Naive thymus-derived CD4-positive, alpha-beta T cell (primary cell): ENCODE measurements at regions of chr6 and their contacts with region 1.

Region 1: GRCh38 chr6:70673601-70674000 is 5.9 kb downstream of the SMAP1 start:
- DNase-seq: no peak
- ATAC-seq: no peak
- H3K4me3 ChIP-seq: no peak overlapping the region
- H3K4me3 Mint-ChIP-seq: peak overlapping the region in 1 of 10 donors; percentile 23
- H3K27ac ChIP-seq: no peak overlapping the region
- H3K27ac Mint-ChIP-seq: peak overlapping the region in 3 of 9 donors; percentile 12 to 63 (median 48)
- H3K4me1 ChIP-seq: peaks cover 21 to 22% of the 10 kb centered on the region in 2 donors
- H3K4me1 Mint-ChIP-seq: peaks cover 33 to 86% (median 72%) of the 10 kb centered on the region in 7 donors
- H3K27me3 ChIP-seq: no peaks in the 10 kb centered on the region
- H3K27me3 Mint-ChIP-seq: no peaks in the 10 kb centered on the region

Region 2: DNA sequence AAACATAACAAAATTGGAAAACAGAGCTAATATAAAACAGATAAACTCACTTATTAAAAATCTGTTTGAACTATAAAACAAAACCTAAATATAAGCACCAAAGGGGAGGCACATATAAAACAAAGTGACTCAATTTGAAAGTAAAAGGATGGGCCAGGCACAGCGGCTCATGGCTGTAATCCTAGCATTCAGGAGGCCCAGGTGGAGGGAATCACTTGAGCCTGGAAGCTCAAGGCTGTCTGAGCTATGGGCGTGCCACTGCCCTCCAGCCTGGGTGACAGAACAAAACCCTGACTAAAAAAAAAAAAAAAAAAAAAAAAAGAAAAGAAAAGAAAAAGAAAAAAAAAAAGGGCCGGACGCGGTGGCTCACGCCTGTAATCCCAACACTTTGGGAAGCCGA is 37.0 kb before region 1 on chr6:
- CTCF ChIA-PET with region 1: no interaction called
- POLR2A ChIA-PET with region 1: no interaction called
- intact Hi-C with region 1: loop called in 1 of 2 experiments (anchors 5 kb)
- DNase-seq: no peak
- ATAC-seq: no peak
- H3K4me3 ChIP-seq: no peak overlapping the region
- H3K4me3 Mint-ChIP-seq: no peak overlapping the region
- H3K27ac ChIP-seq: no peak overlapping the region
- H3K27ac Mint-ChIP-seq: no peak overlapping the region
- H3K4me1 ChIP-seq: no peaks in the 10 kb centered on the region
- H3K4me1 Mint-ChIP-seq: peaks cover 0 to 14% (median 0%) of the 10 kb centered on the region in 7 donors
- H3K27me3 ChIP-seq: no peaks in the 10 kb centered on the region
- H3K27me3 Mint-ChIP-seq: peaks cover 0 to 4% (median 0%) of the 10 kb centered on the region in 5 donors